ENCODE measurements at regions of chr15 and their contacts with region 1.

Region 1: GRCh38 chr15:38563723-38564519 is 693 bp downstream of the RASGRP1 start:
- DNase-seq: peak; percentile 92
- H3K4me3 Mint-ChIP-seq: peak overlapping the region; percentile 95
- H3K27ac Mint-ChIP-seq: peak overlapping the region; percentile 99
- H3K4me1 Mint-ChIP-seq: peaks cover 53% of the 10 kb centered on the region
- H3K27me3 Mint-ChIP-seq: no peaks in the 10 kb centered on the region

Region 2: DNA sequence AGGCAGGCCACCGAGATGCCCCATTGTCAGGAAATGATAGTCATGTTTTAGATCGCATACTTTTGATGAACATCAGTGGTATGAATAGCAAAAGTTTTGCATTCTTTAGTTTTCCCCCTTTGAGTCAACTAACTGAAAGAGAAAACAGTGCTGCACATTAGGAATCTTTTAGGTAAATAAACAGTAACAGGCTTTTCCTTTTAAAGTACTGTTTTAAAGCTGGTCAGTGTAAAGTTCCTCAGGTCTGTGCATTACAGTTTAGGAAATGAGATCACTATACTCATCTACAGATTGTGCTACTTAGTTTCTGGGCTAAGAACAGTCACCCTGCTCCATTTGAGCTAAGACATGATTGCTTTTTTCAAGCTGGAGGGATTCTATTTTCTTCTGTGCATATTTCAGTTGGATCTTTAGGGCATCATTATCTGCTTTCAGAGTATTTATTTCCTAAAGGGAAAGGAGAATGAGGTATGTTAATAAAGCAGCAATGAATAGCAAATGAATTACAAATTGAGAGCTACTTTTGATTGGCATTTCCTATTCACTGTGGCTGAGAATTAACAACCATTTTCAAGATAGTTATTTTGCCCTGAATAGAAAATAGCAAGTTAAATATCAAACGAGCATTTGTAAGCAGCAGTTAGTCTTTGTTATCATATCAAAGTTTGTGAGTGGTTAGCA is 73.5 kb before region 1 on chr15:
- CTCF ChIA-PET with region 1: interaction called, 10 read pairs
- POLR2A ChIA-PET with region 1: interaction called, 3 read pairs
- intact Hi-C with region 1: loop called (anchors 1 kb)
- DNase-seq: no peak
- H3K4me3 Mint-ChIP-seq: no peak overlapping the region
- H3K27ac Mint-ChIP-seq: peak overlapping the region; percentile 61
- H3K4me1 Mint-ChIP-seq: peaks cover 66% of the 10 kb centered on the region
- H3K27me3 Mint-ChIP-seq: no peaks in the 10 kb centered on the region

Region 3: DNA sequence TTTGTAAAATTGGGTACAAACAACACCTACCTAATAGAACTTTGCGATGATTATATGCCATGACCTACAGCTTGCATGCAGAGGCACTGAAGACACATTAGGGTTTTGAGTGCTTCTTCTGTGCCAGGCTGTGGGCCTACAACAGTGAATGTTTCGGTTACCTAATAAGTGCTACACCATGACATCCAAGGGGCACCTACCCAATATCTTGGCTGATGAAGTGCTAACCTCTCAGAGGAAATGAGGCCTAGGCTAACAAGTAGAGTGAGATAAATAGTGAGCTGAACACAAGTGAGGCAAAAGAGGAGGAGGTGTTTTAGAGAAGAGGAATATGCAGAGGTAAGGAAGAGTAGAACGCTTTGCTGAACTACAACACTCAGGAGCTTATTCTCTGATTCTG is 12.9 kb after region 1 on chr15:
- CTCF ChIA-PET with region 1: interaction called, 7 read pairs
- POLR2A ChIA-PET with region 1: interaction called, 15 read pairs
- intact Hi-C with region 1: loop called (anchors 1 kb)
- DNase-seq: no peak
- H3K4me3 Mint-ChIP-seq: no peak overlapping the region
- H3K27ac Mint-ChIP-seq: peak overlapping the region; percentile 71
- H3K4me1 Mint-ChIP-seq: peaks cover 29% of the 10 kb centered on the region
- H3K27me3 Mint-ChIP-seq: no peaks in the 10 kb centered on the region

Region 4: DNA sequence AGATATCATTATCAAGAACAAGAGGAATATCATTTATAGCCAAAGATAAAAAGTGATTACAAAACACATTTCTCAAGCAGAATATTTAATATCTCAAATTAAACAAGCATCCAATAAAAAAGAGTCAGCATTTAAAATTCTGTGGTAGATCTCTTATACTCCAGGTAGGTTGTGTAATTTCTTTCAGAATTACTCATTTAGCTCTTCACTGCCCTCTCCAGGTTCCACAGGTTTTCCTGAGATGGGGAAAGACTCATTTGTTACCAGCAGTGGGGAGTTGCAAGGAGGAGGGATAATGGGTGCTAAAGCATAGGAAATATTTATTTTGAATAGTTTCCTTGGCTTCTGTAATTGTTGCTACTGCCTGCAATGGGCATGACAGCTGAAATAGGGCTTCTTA is 83.8 kb after region 1 on chr15:
- CTCF ChIA-PET with region 1: interaction called, 32 read pairs
- POLR2A ChIA-PET with region 1: interaction called, 28 read pairs
- intact Hi-C with region 1: no loop called
- DNase-seq: no peak
- H3K4me3 Mint-ChIP-seq: no peak overlapping the region
- H3K27ac Mint-ChIP-seq: no peak overlapping the region
- H3K4me1 Mint-ChIP-seq: peaks cover 74% of the 10 kb centered on the region
- H3K27me3 Mint-ChIP-seq: no peaks in the 10 kb centered on the region

Region 5: GRCh38 chr15:38671675-38672254 is 107.8 kb after region 1 on chr15:
- CTCF ChIA-PET with region 1: interaction called, 48 read pairs
- POLR2A ChIA-PET with region 1: interaction called, 133 read pairs
- intact Hi-C with region 1: loop called (anchors 1 kb)
- DNase-seq: peak; percentile 71
- H3K4me3 Mint-ChIP-seq: peak overlapping the region; percentile 66
- H3K27ac Mint-ChIP-seq: peak overlapping the region; percentile 97
- H3K4me1 Mint-ChIP-seq: peaks cover 78% of the 10 kb centered on the region
- H3K27me3 Mint-ChIP-seq: no peaks in the 10 kb centered on the region

Region 6: GRCh38 chr15:38699633-38700230 is 135.8 kb after region 1 on chr15:
- CTCF ChIA-PET with region 1: interaction called, 551 read pairs
- POLR2A ChIA-PET with region 1: interaction called, 41 read pairs
- intact Hi-C with region 1: no loop called
- DNase-seq: peak; percentile 84
- H3K4me3 Mint-ChIP-seq: peak overlapping the region; percentile 50
- H3K27ac Mint-ChIP-seq: peak overlapping the region; percentile 83
- H3K4me1 Mint-ChIP-seq: peaks cover 55% of the 10 kb centered on the region
- H3K27me3 Mint-ChIP-seq: no peaks in the 10 kb centered on the region

Measured in activated CD4-positive, alpha-beta memory T cell treated with anti-CD3 and anti-CD28 coated beads for 36 hours (primary cell).